Activated T-helper 2 cell treated with anti-CD3 and anti-CD28 coated beads, Interferon-gamma antibody, Interleukin-2, Interleukin-4, amounts not matched to agents 10 μg/mL and 5 μg/mL and 100 μg/mL, durations not matched to agents 14 hours and 24 hours and 36 hours (primary cell): ENCODE measurements at regions of chr2 and their contacts with region 1.

Region 1: DNA sequence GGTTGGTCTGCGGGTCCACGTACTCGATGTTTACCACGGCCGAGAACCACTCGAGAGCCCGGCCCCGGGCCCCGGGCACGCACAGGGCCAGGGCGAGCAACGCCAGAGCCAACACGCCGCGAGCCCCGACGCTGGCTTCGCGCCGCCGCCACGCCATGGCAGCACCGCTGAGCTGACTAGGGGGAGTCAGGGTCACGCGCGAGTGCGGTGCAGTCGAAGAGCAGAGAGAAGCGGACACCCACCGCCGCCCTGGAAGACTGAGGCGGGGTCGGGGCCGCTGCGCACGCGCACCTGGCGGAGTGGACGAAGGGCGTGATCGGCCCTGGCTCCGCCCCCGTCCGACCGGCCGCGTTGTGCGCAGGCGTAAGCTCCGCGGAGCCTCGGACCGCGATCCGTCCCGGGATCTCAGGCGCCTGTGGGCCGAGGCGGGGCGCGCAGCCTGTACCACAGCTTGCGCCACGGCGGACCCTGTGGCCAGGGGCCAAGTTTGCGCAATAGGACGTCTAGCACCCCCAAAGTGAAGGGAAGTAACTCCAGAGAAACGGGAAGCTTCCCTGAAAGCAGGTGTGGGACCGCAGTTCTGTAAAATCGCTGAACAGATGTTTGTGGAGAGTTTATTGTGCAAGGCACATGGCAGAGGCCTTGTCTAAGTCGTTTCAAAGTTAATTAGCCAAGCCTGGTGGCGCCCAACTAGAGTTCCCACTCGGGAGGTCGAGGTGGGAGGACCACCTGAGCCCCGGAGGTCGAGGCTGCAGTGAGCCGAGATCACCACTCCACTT is at the start of gene RNF149:
- DNase-seq: peak; percentile 88
- H3K4me3 Mint-ChIP-seq: peak within 1 kb of the TSS; percentile 91
- H3K27ac Mint-ChIP-seq: peak within 1 kb of the TSS; percentile 97
- H3K4me1 Mint-ChIP-seq: peaks cover 59% of the 10 kb centered on the region
- H3K27me3 Mint-ChIP-seq: no peaks in the 10 kb centered on the region
- total RNA-seq, gene RNF149: 50.4 and 54.9 TPM in 2 replicates

Region 2: GRCh38 chr2:100580367-100581276 is 728.0 kb before region 1 on chr2:
- intact Hi-C with region 1: loop called (anchors 10 kb)
- DNase-seq: peak; percentile 50
- H3K4me3 Mint-ChIP-seq: peak overlapping the region; percentile 66
- H3K27ac Mint-ChIP-seq: peak overlapping the region; percentile 91
- H3K4me1 Mint-ChIP-seq: peaks cover 44% of the 10 kb centered on the region
- H3K27me3 Mint-ChIP-seq: no peaks in the 10 kb centered on the region

Region 3: GRCh38 chr2:101208830-101209229 is 99.8 kb before region 1 on chr2:
- intact Hi-C with region 1: no loop called
- DNase-seq: no peak
- H3K4me3 Mint-ChIP-seq: no peak overlapping the region
- H3K27ac Mint-ChIP-seq: no peak overlapping the region
- H3K4me1 Mint-ChIP-seq: no peaks in the 10 kb centered on the region
- H3K27me3 Mint-ChIP-seq: no peaks in the 10 kb centered on the region

Region 4: DNA sequence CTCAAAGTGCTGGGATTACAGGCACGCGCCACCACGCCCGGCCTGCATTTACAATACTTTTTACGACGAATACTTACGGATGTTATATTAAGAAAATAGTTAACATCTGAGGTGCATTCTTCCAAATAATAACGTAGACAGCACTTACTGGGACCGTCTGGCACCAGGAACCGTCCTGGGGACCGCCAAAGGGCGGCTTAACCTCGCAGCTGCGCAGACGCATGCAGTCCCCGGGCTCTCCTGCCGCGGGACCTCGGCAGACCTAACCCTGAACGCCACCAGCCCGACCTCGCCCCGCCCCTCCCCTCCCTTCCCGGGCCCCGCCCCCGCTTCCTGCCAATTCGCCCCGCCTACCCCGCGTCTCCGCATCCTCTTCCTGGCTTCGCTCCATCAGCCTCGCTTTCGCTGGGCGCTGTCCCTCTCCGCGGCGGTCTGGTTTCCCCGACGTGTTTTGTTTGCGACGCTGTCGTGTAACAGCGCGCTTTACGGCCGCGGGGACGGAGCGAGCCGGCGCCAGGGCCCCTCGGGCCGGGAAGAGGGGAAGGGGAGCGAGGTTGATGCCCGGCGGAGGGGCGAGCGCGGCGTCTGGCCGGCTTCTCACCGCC is 56.1 kb before region 1 on chr2 and contains the start of gene CNOT11:
- intact Hi-C with region 1: loop called (anchors 1 kb)
- DNase-seq: peak; percentile 98
- H3K4me3 Mint-ChIP-seq: peak within 1 kb of the TSS; percentile 96
- H3K27ac Mint-ChIP-seq: peak within 1 kb of the TSS; percentile 95
- H3K4me1 Mint-ChIP-seq: peaks cover 34% of the 10 kb centered on the region
- H3K27me3 Mint-ChIP-seq: no peaks in the 10 kb centered on the region
- total RNA-seq, gene CNOT11: 64.0 and 77.6 TPM in 2 replicates

Region 5: DNA sequence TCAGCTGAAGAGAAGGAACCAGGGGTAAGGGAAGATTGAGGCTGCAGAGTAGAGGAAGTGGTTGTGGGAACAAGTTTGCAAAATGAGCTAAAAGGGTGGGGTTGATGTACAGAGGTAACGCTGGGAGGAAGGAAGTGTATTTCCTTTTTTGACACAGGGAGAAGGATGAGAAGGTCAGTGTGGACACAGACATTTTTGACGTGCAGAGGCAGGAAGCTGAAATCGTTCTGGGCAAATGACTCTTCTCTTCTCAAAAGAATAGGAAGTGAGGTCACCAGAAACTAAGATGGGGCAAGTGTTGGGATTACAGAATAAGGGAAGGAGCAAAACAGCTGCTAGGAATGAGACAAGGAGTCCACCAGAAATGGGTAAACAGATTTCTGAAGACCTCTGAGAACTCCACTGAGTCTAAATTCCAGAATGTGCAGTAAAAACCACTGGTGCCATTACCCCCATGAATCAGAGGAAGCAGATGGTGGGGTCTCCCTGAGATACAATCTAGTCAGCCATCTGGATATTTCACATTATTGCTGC is 19.9 kb after region 1 on chr2:
- intact Hi-C with region 1: loop called (anchors 1 kb)
- DNase-seq: peak; percentile 50
- H3K4me3 Mint-ChIP-seq: no peak overlapping the region
- H3K27ac Mint-ChIP-seq: no peak overlapping the region
- H3K4me1 Mint-ChIP-seq: peaks cover 20% of the 10 kb centered on the region
- H3K27me3 Mint-ChIP-seq: no peaks in the 10 kb centered on the region

Region 6: DNA sequence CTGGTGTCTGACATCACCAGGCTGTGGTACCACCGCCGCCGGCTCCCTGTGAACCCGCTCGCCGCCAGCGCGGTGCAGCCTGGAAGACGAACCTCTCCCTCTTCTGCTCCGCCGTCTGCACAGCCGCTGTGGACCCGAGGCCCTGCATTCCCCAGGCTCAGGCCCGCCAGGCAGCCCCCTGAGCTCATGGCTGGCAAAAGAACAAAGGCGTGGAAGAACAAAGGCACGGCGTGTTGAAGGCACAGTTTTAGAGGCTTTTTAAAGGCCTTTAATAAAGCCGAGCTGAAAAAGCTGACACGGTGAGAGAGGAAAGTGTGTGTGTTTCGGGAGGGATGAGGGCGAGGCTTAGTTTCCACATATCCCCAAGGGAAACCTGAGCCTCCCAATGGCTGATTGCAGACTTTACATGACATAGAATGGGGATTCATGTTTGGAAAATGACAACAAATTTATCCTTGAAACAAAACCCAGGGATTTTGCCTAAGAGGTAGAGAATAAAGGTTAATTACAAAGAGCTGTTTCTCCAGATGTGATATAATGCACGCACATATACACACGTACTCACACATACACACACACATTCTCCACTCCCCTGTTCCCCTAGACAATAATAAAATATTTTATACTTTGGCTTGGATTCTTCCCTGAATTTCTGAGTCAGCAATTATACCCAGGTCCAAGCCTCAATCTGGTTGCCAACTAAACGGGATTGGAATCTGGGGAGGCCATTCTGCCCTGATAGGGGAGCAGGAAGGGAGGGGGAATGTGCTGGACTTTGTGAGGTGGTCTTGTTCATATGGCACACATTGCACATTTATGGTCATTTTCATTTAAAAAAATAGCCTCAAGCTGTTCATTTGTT is 126.6 kb after region 1 on chr2:
- intact Hi-C with region 1: no loop called
- DNase-seq: no peak
- H3K4me3 Mint-ChIP-seq: no peak overlapping the region
- H3K27ac Mint-ChIP-seq: no peak overlapping the region
- H3K4me1 Mint-ChIP-seq: peaks cover 16% of the 10 kb centered on the region
- H3K27me3 Mint-ChIP-seq: no peaks in the 10 kb centered on the region

Region 7: GRCh38 chr2:101823347-101823791 is 514.7 kb after region 1 on chr2:
- intact Hi-C with region 1: loop called (anchors 10 kb)
- DNase-seq: peak; percentile 51
- H3K4me3 Mint-ChIP-seq: peak overlapping the region; percentile 18
- H3K27ac Mint-ChIP-seq: peak overlapping the region; percentile 21
- H3K4me1 Mint-ChIP-seq: peaks cover 63% of the 10 kb centered on the region
- H3K27me3 Mint-ChIP-seq: no peaks in the 10 kb centered on the region

Region 8: GRCh38 chr2:103132536-103133217 is 1824.1 kb after region 1 on chr2:
- intact Hi-C with region 1: no loop called
- DNase-seq: peak; percentile 13
- H3K4me3 Mint-ChIP-seq: peak overlapping the region; percentile 51
- H3K27ac Mint-ChIP-seq: no peak overlapping the region
- H3K4me1 Mint-ChIP-seq: peaks cover 8% of the 10 kb centered on the region
- H3K27me3 Mint-ChIP-seq: no peaks in the 10 kb centered on the region